ENCODE measurements at regions of chr12 and their contacts with region 1.

Region 1: GRCh38 chr12:52278541-52279421 is 4.3 kb downstream of the KRT86 start:
- DNase-seq: peak; percentile 95
- H3K4me3 ChIP-seq: peak overlapping the region; percentile 38 to 54 (median 47)
- H3K27ac ChIP-seq: peak overlapping the region; percentile 86 to 92 (median 90)
- H3K4me1 ChIP-seq: peaks cover 29 to 42% (median 37%) of the 10 kb centered on the region in 4 donors
- H3K27me3 ChIP-seq: no peaks in the 10 kb centered on the region
- CTCF ChIP-seq: peak; percentile 94 to 97 (median 95)
- EP300 ChIP-seq: no peak
- POLR2A ChIP-seq: no peak

Region 2: DNA sequence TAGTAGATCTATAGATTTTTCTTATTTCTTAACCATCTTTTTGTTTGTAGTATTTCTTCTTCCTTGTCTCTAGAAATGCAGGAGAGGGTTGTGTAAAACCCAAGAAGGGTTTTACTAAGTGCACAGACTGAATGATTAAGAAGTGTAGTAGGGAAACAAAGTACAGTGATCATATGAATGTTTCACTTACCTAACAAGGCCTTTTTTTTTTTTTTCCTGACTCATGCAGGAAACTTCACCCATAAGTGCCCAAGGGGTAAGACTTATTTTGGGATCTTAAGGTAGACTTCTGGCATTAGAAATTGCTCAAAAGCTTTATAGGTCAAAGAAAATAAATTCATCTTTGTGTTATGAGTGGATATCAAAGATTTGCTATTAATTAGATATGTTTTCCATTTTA is 677.5 kb before region 1 on chr12:
- intact Hi-C with region 1: no loop called
- DNase-seq: no peak
- H3K4me3 ChIP-seq: no peak overlapping the region
- H3K27ac ChIP-seq: no peak overlapping the region
- H3K4me1 ChIP-seq: no peaks in the 10 kb centered on the region
- H3K27me3 ChIP-seq: peaks cover 0 to 11% (median 0%) of the 10 kb centered on the region in 4 donors
- CTCF ChIP-seq: no peak
- EP300 ChIP-seq: no peak
- POLR2A ChIP-seq: no peak

Region 3: GRCh38 chr12:52167954-52168717 is 110.6 kb before region 1 on chr12:
- intact Hi-C with region 1: loop called (anchors 5 kb)
- DNase-seq: no peak
- H3K4me3 ChIP-seq: no peak overlapping the region
- H3K27ac ChIP-seq: no peak overlapping the region
- H3K4me1 ChIP-seq: peaks cover 7 to 12% (median 9%) of the 10 kb centered on the region in 4 donors
- H3K27me3 ChIP-seq: no peaks in the 10 kb centered on the region
- CTCF ChIP-seq: no peak
- EP300 ChIP-seq: no peak
- POLR2A ChIP-seq: no peak

Region 4: GRCh38 chr12:52221912-52222457 is 56.8 kb before region 1 on chr12:
- intact Hi-C with region 1: loop called (anchors 5 kb)
- DNase-seq: no peak
- H3K4me3 ChIP-seq: no peak overlapping the region
- H3K27ac ChIP-seq: no peak overlapping the region
- H3K4me1 ChIP-seq: peaks cover 0 to 5% (median 4%) of the 10 kb centered on the region in 4 donors
- H3K27me3 ChIP-seq: peaks cover 0 to 38% (median 2%) of the 10 kb centered on the region in 4 donors
- CTCF ChIP-seq: peak in 2 of 3 experiments; percentile 21 to 37
- EP300 ChIP-seq: no peak
- POLR2A ChIP-seq: no peak

Measured in esophagus muscularis mucosa (tissue), 4 donors.